ENCODE measurements at regions of chr7 and their contacts with region 1.

Region 1: GRCh38 chr7:836411-837400 is 4.4 kb downstream of the SUN1 start:
- DNase-seq: peak; percentile 60
- H3K4me3 Mint-ChIP-seq: no peak overlapping the region
- H3K27ac Mint-ChIP-seq: peak overlapping the region; percentile 15
- H3K4me1 Mint-ChIP-seq: peaks cover 42% of the 10 kb centered on the region
- H3K27me3 Mint-ChIP-seq: no peaks in the 10 kb centered on the region
- CTCF ChIP-seq: peak; percentile 32

Region 2: DNA sequence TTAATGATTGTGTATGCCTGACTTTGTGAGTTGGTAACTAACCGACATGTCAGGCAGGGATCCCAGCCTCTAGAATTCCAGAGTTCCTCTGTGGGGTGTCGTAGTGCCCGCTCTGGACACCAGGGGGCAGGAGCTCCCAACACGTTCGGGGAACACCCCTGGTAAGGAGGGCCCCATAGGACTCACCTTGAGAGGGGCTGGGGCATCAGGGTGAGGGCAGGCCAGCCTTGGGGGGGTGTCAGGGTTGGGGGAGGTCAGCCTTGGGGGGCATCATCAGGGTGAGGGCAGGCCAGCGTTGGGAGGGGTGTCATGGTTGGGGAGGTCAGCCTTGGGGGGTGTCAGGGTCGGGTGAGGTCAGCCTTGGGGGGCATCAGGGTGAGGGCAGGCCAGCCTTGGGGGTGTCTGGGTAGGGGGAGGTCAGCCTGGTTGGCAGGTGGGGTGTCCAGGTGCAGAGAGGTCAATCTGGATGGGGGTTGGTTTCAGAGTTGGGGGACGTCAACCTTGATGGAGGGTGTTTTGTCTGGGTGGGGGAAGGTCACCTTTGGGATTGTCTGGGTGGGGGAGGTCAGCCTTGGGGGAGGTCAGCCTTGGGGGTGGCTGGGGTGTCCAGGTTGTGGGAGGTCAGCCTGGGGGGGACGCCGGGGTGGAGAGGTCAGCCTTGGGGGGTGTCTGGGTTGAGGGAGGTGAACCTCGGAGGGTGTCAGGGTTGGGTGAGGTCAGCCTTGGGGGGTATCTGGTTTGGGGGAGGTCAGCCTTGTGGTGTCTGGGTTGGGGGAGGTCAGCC is 50.0 kb before region 1 on chr7:
- CTCF ChIA-PET with region 1: interaction called, 6 read pairs
- intact Hi-C with region 1: loop called (anchors 1 kb)
- DNase-seq: peak; percentile 89
- H3K4me3 Mint-ChIP-seq: no peak overlapping the region
- H3K27ac Mint-ChIP-seq: no peak overlapping the region
- H3K4me1 Mint-ChIP-seq: no peaks in the 10 kb centered on the region
- H3K27me3 Mint-ChIP-seq: no peaks in the 10 kb centered on the region
- CTCF ChIP-seq: peak; percentile 94